ENCODE measurements at regions of chr15 and their contacts with region 1.

Region 1: GRCh38 chr15:25582886-25583285 is 144.1 kb upstream of the UBE3A start:
- DNase-seq: no peak
- H3K4me3 ChIP-seq: no peak overlapping the region
- H3K27ac ChIP-seq: no peak overlapping the region
- H3K4me1 ChIP-seq: no peaks in the 10 kb centered on the region
- H3K27me3 ChIP-seq: no peaks in the 10 kb centered on the region
- CTCF ChIP-seq: no peak
- POLR2A ChIP-seq: no peak

Region 2: GRCh38 chr15:25527118-25527517 is 55.8 kb before region 1 on chr15:
- intact Hi-C with region 1: loop called (anchors 10 kb)
- DNase-seq: no peak
- H3K4me3 ChIP-seq: no peak overlapping the region
- H3K27ac ChIP-seq: no peak overlapping the region
- H3K4me1 ChIP-seq: peaks cover 0 to 8% (median 0%) of the 10 kb centered on the region in 3 donors
- H3K27me3 ChIP-seq: no peaks in the 10 kb centered on the region
- CTCF ChIP-seq: no peak
- POLR2A ChIP-seq: no peak

Measured in esophagus squamous epithelium (tissue), 5 donors.